Activated naive CD4-positive, alpha-beta T cell treated with anti-CD3 and anti-CD28 coated beads for 36 hours (primary cell): ENCODE measurements at regions of chr6 and their contacts with region 1.

Region 1: DNA sequence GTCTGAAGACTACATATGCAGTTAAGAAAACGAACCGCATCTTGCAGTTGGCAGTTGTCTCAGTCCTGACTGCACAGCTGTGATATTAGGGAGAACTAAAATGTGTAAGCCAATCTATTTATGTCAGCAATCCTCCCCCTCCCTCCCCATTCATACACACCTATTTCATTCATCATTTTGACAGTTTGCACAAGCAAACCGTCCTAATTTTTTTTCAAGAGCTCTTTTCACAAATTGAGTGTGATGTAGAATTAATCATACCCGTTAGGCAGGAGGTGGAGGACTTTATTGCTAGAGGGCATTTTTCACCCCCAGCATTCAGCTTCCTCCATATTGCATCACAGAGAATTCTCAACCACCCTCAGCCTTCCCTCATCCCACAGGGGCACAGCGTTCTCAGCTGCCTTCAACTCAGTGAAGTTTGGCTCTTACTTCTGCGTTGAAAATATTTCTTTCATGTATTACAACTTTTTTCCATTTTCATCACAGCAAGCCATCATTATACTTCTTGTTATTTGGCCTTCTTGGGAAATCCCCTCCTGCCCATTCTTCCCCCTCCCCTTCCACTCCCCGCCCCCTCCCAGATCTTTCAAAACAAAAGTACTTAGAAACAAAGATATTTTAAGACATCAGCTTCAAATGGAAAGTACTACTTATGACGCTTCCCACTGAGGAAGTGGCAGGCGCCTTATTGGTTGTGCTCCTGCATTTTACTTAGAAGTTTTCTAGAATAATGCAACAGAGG is 37.5 kb downstream of the NOX3 start:
- DNase-seq: peak; percentile 87
- H3K4me3 Mint-ChIP-seq: peak overlapping the region; percentile 55
- H3K27ac Mint-ChIP-seq: peak overlapping the region; percentile 96
- H3K4me1 Mint-ChIP-seq: peaks cover 43% of the 10 kb centered on the region
- H3K27me3 Mint-ChIP-seq: no peaks in the 10 kb centered on the region

Region 2: DNA sequence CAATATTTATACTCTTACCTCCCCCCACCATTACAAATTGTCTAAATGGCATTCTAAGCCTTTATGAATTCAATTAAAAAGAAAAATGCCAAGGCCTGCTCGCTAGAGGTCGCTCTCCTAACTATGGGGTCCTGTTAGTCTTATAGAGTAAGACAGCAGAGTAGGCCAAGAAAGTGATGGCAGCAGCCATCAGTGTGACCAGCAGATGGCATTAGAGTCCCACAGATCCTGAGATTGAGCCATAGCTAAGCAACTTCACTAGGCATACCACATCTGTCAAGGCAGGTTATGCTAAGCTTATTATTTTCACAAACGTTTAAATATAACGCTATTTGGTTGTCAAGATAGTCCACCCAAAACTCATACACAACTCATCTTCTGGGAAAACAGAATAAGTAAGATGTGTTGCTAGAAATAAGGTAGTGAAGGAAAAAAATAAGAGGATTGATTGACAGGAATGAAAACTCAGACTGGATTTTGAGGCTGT is 742.5 kb before region 1 on chr6:
- CTCF ChIA-PET with region 1: no interaction called
- intact Hi-C with region 1: loop called (anchors 5 kb)
- DNase-seq: peak; percentile 96
- H3K4me3 Mint-ChIP-seq: no peak overlapping the region
- H3K27ac Mint-ChIP-seq: no peak overlapping the region
- H3K4me1 Mint-ChIP-seq: no peaks in the 10 kb centered on the region
- H3K27me3 Mint-ChIP-seq: no peaks in the 10 kb centered on the region

Region 3: GRCh38 chr6:155223646-155224451 is 194.3 kb before region 1 on chr6:
- CTCF ChIA-PET with region 1: no interaction called
- intact Hi-C with region 1: loop called (anchors 1 kb)
- DNase-seq: peak; percentile 82
- H3K4me3 Mint-ChIP-seq: no peak overlapping the region
- H3K27ac Mint-ChIP-seq: peak overlapping the region; percentile 74
- H3K4me1 Mint-ChIP-seq: peaks cover 25% of the 10 kb centered on the region
- H3K27me3 Mint-ChIP-seq: peaks cover 18% of the 10 kb centered on the region

Region 4: GRCh38 chr6:155493694-155494143 is 75.5 kb after region 1 on chr6:
- CTCF ChIA-PET with region 1: interaction called, 4 read pairs
- intact Hi-C with region 1: loop called (anchors 1 kb)
- DNase-seq: peak; percentile 53
- H3K4me3 Mint-ChIP-seq: no peak overlapping the region
- H3K27ac Mint-ChIP-seq: peak overlapping the region; percentile 50
- H3K4me1 Mint-ChIP-seq: peaks cover 41% of the 10 kb centered on the region
- H3K27me3 Mint-ChIP-seq: no peaks in the 10 kb centered on the region

Region 5: GRCh38 chr6:155530219-155530834 is 112.1 kb after region 1 on chr6:
- CTCF ChIA-PET with region 1: interaction called, 8 read pairs
- intact Hi-C with region 1: loop called (anchors 1 kb)
- DNase-seq: peak; percentile 47
- H3K4me3 Mint-ChIP-seq: no peak overlapping the region
- H3K27ac Mint-ChIP-seq: no peak overlapping the region
- H3K4me1 Mint-ChIP-seq: peaks cover 22% of the 10 kb centered on the region
- H3K27me3 Mint-ChIP-seq: no peaks in the 10 kb centered on the region

Region 6: GRCh38 chr6:157099912-157100593 is 1681.9 kb after region 1 on chr6:
- CTCF ChIA-PET with region 1: no interaction called
- intact Hi-C with region 1: loop called (anchors 10 kb)
- DNase-seq: peak; percentile 80
- H3K4me3 Mint-ChIP-seq: no peak overlapping the region
- H3K27ac Mint-ChIP-seq: peak overlapping the region; percentile 84
- H3K4me1 Mint-ChIP-seq: peaks cover 55% of the 10 kb centered on the region
- H3K27me3 Mint-ChIP-seq: no peaks in the 10 kb centered on the region